Endothelial cell of umbilical vein (primary cell): ENCODE measurements at regions of chr3 and their contacts with region 1.

Region 1: DNA sequence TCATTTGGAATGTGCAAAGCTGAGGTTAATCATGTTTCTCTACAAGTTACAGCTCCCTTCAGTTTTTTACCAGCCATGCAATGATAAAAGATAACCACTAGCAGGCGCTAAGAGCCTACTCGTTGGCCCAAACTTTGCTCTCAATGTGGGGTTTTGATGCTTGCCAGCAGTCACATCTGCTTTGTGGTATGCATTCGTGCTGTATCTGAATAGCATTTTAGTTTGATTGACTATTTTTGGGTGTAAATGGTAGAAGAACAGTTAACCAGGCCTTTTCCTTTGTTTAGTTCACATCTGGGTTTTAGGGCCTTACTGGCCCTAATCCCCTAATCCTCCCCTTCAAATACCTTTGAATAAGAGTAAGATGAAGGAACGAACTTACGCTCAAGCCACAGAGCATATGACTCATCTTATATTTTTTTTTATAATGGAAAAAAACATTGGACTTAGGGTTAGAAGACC is 4.4 kb upstream of the CLDN11 start:
- DNase-seq: peak; percentile 80
- H3K4me3 ChIP-seq: no peak overlapping the region
- H3K27ac ChIP-seq: no peak overlapping the region
- H3K4me1 ChIP-seq: peaks cover 5% of the 10 kb centered on the region
- H3K27me3 ChIP-seq: no peaks in the 10 kb centered on the region
- CTCF ChIP-seq: peak; percentile 90 to 92
- POLR2A ChIP-seq: no peak

Region 2: DNA sequence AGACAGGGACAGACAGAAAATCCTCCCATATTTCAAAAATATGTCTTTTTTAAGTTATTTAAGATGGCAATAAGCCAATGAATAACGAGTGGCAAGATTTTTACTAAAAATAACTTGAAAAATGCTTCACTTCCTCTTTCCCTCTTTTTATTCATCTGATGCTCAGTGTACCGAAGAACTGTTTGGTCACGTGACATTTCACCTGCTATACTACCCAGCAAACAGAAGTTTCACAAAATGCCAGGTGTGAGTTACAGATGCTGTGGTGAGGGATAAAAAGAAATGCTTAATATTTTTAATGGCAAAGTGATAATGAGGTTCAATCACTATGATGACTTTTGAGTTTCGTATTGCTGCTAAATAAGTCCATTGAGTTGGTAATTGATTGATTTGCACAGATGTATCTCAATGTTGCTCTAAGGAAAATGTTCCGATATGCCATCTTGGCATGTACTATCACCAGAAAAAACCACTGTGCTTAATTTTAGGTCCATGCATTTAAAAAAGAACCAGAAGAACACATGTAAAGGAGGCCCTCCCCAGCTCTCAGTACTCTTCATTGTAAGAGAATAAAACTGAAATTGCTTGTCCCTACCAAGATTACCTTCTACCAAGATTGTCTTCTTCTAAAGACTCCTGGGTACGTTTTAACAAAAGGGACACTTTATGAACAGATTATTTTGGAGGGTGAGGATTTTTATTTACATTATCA is 473.6 kb before region 1 on chr3:
- CTCF ChIA-PET with region 1: no interaction called
- POLR2A ChIA-PET with region 1: no interaction called
- dilution Hi-C with region 1: no loop called
- intact Hi-C with region 1: no loop called
- DNase-seq: no peak
- H3K4me3 ChIP-seq: no peak overlapping the region
- H3K27ac ChIP-seq: no peak overlapping the region
- H3K4me1 ChIP-seq: peaks cover 4% of the 10 kb centered on the region
- H3K27me3 ChIP-seq: peaks cover 9 to 15% of the 10 kb centered on the region in 2 experiments
- CTCF ChIP-seq: no peak
- POLR2A ChIP-seq: no peak

Region 3: DNA sequence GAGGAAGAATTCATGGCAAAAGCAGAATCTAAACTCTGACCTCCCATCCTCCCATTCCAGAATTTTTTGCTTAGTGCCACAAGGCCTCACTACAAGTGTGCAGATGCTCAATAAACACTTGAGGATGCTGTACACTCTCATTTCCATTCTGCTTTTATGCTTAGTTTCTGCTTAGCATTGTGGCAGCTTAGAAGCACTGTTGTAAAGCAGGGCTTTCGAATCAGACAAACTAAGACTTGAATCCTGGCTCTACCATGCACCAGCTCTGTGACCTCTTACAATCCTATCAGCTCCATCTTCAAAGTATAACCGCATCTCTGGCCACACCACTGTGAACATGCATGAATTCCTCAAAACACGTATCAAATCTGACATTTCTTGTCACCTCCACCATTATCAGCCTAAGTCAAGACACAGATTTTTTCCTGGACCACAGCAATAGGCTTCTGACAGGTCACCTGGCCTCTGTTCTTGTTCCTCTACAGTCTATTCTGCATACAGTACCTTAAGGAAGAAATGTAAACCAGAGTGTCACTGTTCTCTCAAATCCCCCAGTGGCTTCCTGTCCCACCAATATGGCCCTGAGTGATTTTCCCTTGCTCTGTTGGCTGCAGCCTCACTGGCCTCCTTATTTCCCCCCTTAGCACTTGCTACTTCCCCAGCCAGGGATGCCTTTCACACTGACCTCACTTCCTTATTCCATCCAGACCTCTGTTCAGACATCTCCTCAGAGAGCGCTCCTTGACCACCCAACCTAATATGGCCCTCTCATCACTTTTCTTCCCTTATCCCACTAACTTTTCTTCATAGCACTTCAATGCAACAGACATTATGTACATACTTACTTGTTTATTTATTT is 224.6 kb before region 1 on chr3:
- CTCF ChIA-PET with region 1: interaction called, 11 read pairs
- POLR2A ChIA-PET with region 1: no interaction called
- dilution Hi-C with region 1: no loop called
- intact Hi-C with region 1: loop called (anchors 1 kb)
- DNase-seq: no peak
- H3K4me3 ChIP-seq: no peak overlapping the region
- H3K27ac ChIP-seq: no peak overlapping the region
- H3K4me1 ChIP-seq: no peaks in the 10 kb centered on the region
- H3K27me3 ChIP-seq: peaks cover 0 to 6% of the 10 kb centered on the region in 2 experiments
- CTCF ChIP-seq: no peak
- POLR2A ChIP-seq: no peak

Region 4: DNA sequence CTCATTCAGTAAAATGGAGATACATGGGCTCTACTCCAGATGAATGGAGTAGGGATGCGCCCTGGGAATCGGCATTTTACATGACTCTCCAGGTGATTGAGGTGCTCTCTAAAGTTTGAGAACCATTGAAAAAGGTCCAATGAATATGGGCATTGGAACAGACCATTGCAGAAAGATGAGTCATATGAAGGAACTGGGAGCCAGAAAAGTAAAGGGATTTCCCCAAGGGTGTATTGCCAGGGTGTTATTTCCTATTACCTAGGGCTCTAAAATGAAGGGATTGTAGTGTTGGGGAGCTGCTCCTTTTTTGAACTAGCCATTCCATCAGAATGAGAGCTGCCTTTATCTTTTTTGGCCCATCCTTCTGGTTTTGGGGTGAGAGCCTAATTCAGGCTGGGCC is 26.1 kb after region 1 on chr3:
- CTCF ChIA-PET with region 1: interaction called, 15 read pairs
- POLR2A ChIA-PET with region 1: no interaction called
- dilution Hi-C with region 1: no loop called
- intact Hi-C with region 1: no loop called
- DNase-seq: peak; percentile 31
- H3K4me3 ChIP-seq: no peak overlapping the region
- H3K27ac ChIP-seq: no peak overlapping the region
- H3K4me1 ChIP-seq: peaks cover 13% of the 10 kb centered on the region
- H3K27me3 ChIP-seq: no peaks in the 10 kb centered on the region
- CTCF ChIP-seq: no peak
- POLR2A ChIP-seq: no peak

Region 5: GRCh38 chr3:170563712-170564423 is 149.6 kb after region 1 on chr3:
- CTCF ChIA-PET with region 1: interaction called, 3 read pairs
- POLR2A ChIA-PET with region 1: no interaction called
- dilution Hi-C with region 1: no loop called
- intact Hi-C with region 1: loop called (anchors 2 kb)
- DNase-seq: peak; percentile 86
- H3K4me3 ChIP-seq: no peak overlapping the region
- H3K27ac ChIP-seq: peak overlapping the region; percentile 0
- H3K4me1 ChIP-seq: peaks cover 12% of the 10 kb centered on the region
- H3K27me3 ChIP-seq: no peaks in the 10 kb centered on the region
- CTCF ChIP-seq: no peak
- POLR2A ChIP-seq: no peak

Region 6: GRCh38 chr3:170760194-170760526 is 345.9 kb after region 1 on chr3:
- CTCF ChIA-PET with region 1: interaction called, 12 read pairs
- POLR2A ChIA-PET with region 1: no interaction called
- dilution Hi-C with region 1: no loop called
- intact Hi-C with region 1: no loop called
- DNase-seq: no peak
- H3K4me3 ChIP-seq: no peak overlapping the region
- H3K27ac ChIP-seq: no peak overlapping the region
- H3K4me1 ChIP-seq: peaks cover 20% of the 10 kb centered on the region
- H3K27me3 ChIP-seq: no peaks in the 10 kb centered on the region
- CTCF ChIP-seq: no peak
- POLR2A ChIP-seq: no peak

Region 7: GRCh38 chr3:170840241-170840859 is 426.1 kb after region 1 on chr3:
- CTCF ChIA-PET with region 1: interaction called, 16 read pairs
- POLR2A ChIA-PET with region 1: interaction called, 5 read pairs
- dilution Hi-C with region 1: no loop called
- intact Hi-C with region 1: no loop called
- DNase-seq: peak; percentile 89
- H3K4me3 ChIP-seq: no peak overlapping the region
- H3K27ac ChIP-seq: no peak overlapping the region
- H3K4me1 ChIP-seq: no peaks in the 10 kb centered on the region
- H3K27me3 ChIP-seq: peaks cover 2 to 3% of the 10 kb centered on the region in 2 experiments
- CTCF ChIP-seq: no peak
- POLR2A ChIP-seq: no peak